Endothelial cell of umbilical vein (primary cell): ENCODE measurements at regions of chr10 and their contacts with region 1.

Region 1: DNA sequence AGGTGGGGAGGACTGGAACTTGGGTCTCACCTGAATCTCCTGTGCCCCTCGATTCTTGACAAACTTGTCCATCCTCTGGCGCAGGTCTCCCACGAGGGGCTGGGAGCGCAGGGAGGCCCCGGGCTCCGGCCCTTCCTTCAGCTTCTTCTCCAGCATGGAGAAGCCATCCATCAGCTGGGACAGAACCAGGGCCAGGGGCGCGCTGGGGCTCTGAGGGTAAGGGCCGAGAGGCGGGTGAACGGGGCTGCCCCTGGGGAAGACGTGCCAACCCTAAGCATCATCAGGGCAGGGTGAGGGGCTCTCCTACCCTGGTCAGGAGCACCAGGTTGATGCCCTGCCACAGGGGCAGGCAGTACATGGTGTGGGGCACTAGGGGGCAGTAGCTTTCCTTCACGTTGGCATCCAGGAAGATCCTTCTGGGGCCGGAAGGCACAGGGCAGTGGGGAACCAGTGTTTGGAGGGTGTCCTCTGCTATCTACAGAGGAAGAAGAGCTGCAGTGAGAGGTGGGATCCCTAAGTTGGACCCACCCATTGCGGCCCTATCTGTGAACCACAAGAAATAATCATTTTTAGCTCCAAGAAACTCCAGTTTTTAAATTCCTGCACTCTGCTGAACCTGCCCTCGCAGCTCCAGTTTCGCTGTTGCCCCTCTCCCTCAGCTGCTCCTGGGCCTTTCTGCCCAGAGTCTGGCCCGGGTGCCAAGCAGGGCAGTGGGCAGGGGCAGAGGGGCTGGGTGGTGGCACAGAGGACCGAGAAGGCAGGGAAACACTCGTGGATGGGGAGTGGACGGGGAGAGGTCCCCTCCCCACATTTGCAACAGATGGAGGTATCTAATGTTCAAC is 10.8 kb upstream of the PYROXD2 start:
- DNase-seq: peak; percentile 46
- H3K4me3 ChIP-seq: no peak overlapping the region
- H3K27ac ChIP-seq: no peak overlapping the region
- H3K4me1 ChIP-seq: no peaks in the 10 kb centered on the region
- H3K27me3 ChIP-seq: no peaks in the 10 kb centered on the region
- CTCF ChIP-seq: peak; percentile 79 to 80
- POLR2A ChIP-seq: no peak

Region 2: DNA sequence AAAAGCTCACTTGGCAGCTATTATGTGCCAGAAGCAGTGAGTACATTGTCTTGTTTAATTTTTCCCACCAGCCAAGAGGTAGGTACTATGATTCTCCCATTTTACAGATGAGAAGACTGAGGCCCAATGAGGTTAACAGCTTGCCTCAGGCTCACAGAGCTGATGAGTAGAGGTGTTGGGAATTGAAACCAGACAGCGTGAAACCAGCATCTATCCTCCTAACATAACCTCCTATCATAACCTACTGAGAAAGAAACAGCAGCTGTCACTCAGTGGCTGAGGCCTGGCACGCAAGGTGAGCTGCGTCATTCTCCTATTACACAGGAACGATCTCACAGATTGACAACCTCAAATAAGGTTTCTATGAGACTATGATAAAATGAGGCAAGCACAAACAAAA is 16.9 kb before region 1 on chr10:
- CTCF ChIA-PET with region 1: interaction called, 16 read pairs
- POLR2A ChIA-PET with region 1: no interaction called
- dilution Hi-C with region 1: no loop called
- intact Hi-C with region 1: no loop called
- DNase-seq: no peak
- H3K4me3 ChIP-seq: no peak overlapping the region
- H3K27ac ChIP-seq: no peak overlapping the region
- H3K4me1 ChIP-seq: no peaks in the 10 kb centered on the region
- H3K27me3 ChIP-seq: no peaks in the 10 kb centered on the region
- CTCF ChIP-seq: no peak
- POLR2A ChIP-seq: no peak

Region 3: GRCh38 chr10:98460837-98461499 is 35.2 kb after region 1 on chr10:
- CTCF ChIA-PET with region 1: interaction called, 9 read pairs
- POLR2A ChIA-PET with region 1: no interaction called
- dilution Hi-C with region 1: no loop called
- intact Hi-C with region 1: loop called (anchors 1 kb)
- DNase-seq: peak; percentile 93
- H3K4me3 ChIP-seq: no peak overlapping the region
- H3K27ac ChIP-seq: peak overlapping the region; percentile 98
- H3K4me1 ChIP-seq: peaks cover 15% of the 10 kb centered on the region
- H3K27me3 ChIP-seq: no peaks in the 10 kb centered on the region
- CTCF ChIP-seq: no peak
- POLR2A ChIP-seq: no peak

Region 4: GRCh38 chr10:99248824-99249223 is 823.1 kb after region 1 on chr10:
- CTCF ChIA-PET with region 1: interaction called, 18 read pairs
- POLR2A ChIA-PET with region 1: no interaction called
- dilution Hi-C with region 1: no loop called
- intact Hi-C with region 1: no loop called
- DNase-seq: no peak
- H3K4me3 ChIP-seq: no peak overlapping the region
- H3K27ac ChIP-seq: no peak overlapping the region
- H3K4me1 ChIP-seq: no peaks in the 10 kb centered on the region
- H3K27me3 ChIP-seq: no peaks in the 10 kb centered on the region
- CTCF ChIP-seq: no peak
- POLR2A ChIP-seq: no peak